Heart left ventricle (tissue), 16 donors: ENCODE measurements at regions of chr6 and their contacts with region 1.

Region 1: DNA sequence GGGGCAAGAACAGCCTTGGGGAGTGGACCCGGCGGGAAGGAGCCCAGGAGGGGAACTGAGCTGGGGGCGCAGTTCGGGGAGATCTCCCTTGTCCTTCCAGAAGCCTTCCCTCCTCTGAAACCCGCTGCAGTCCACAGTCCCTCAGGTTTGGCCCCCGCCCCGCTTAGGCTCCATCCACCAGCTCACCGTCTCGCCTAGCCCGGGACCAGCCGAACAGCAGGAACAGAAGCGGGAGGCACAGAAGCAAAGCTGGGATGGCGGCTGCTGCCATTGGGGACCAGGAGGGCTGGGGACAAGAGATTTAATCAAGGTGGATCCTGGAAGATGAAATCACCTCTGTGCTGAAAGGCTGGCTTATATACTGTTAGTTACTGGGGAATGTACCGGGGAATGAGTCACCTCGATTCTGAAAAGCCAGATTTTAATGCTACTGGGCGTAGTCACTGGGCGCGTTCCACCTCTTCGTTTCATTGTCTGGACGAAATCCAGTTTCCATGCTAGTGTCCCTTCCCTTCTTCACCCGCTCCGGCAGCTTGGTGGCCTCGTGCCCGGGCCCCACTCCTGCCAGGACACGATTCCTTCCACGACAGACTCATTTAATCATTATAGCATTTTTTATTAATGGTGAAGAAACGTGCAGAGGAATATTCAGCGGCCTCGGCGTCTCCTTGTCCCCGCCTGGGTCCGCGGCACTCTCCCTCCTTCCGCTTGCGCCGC is at the start of gene RAET1L:
- DNase-seq: no peak
- ATAC-seq: peak in 3 of 4 donors; percentile 49 to 79 (median 62)
- H3K4me3 ChIP-seq: peak within 1 kb of the TSS in 10 of 12 donors; percentile 5 to 46 (median 33)
- H3K27ac ChIP-seq: no peak within 1 kb of the TSS
- H3K4me1 ChIP-seq: peaks cover 0 to 14% (median 11%) of the 10 kb centered on the region in 12 donors
- H3K27me3 ChIP-seq: peaks cover 9 to 45% (median 28%) of the 10 kb centered on the region in 9 donors
- CTCF ChIP-seq: no peak
- POLR2A ChIP-seq: no peak
- total RNA-seq, gene RAET1L: not detected

Region 2: DNA sequence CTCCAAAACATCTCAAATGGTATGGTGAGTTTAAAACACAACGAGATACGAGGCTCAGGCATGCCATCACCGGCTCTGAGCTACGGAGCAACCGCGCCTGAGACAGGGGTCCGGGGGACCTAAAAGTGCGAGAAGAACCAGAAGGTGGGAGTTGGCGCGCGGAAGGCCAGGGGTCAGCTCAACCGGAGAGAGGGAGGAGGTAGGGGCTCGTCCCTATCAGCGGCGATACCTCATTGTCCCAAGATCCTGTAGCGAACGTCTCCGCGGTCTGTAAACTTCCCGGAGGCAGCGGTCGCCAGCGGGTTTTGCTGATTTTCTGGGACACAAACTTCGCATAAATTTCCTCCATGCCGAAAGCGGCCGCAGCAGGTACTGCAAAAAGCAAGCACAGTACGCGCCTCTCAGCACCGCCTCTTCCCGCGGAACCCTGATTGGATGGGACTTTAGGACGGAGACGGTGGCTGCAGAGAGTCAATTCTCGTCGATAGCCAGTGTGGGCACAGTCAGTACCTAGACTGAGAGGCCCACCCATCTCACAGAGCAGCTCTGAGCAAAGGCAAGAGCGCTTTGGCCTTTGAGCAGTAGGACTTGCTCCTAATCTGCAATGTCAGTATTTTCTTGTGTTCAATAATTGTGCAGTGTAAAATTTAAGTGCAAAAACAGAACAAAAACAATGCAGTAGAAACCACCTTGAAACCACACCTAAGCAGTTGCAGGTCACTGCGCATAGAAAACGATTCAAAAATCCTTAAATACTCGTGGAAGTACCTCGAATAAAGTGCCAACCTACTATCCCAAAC is 279.0 kb before region 1 on chr6 and contains the start of gene NUP43:
- intact Hi-C with region 1: no loop called
- DNase-seq: peak; percentile 94 to 97 (median 95)
- ATAC-seq: peak; percentile 74 to 85 (median 82)
- H3K4me3 ChIP-seq: peak within 1 kb of the TSS; percentile 49 to 91 (median 74)
- H3K27ac ChIP-seq: peak within 1 kb of the TSS; percentile 13 to 83 (median 72)
- H3K4me1 ChIP-seq: peaks cover 0 to 32% (median 25%) of the 10 kb centered on the region in 12 donors
- H3K27me3 ChIP-seq: no peaks in the 10 kb centered on the region
- CTCF ChIP-seq: peak in 11 of 12 donors; percentile 39 to 72 (median 50)
- POLR2A ChIP-seq: peak in 1 of 2 donors; percentile 36
- total RNA-seq, gene NUP43: 14.5 to 32.9 (median 27.2) TPM

Region 3: DNA sequence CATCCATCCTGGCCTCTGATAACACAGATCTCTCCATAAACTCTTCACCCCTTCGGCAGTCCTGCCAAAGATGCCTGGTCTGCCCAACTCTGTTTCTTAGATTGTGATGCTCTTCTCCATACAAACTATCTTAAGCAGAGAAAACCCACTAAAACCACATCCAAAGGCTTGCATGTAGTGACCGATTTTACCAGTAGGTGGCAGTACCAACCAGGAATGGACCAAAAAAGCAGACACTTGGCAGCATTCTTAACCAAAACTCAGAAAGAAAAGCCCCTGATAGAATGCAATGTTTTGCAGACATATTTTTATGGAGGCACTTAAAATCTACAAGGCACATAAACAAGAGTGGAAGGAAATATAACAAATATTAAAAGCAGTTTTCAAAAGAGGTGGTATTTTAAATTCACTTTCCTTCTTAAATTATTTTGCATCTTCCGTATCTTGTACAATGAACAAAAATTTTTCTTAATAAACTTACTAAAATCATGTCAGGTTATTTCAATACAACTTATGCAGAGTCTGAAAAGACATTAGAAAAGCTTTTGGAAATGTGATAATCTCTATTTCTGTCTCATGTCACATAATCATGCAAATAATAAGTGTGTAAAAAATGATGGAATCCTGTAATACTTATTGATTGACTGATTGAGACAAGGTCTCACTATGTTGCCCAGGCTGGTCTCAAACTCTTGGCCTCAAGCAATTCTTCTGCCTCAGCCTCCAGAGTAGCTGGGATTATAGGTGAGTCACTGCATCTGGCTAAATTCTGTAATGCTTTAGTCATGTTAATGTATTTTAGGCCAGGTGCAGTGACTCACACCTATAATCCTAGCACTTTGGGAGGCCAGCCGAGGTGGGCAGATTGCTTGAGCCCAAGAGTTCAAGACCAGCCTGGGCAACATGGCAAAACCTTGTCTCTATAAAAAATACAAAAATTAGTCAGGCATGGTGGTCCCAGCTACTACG is 190.6 kb before region 1 on chr6:
- intact Hi-C with region 1: loop called in 1 of 10 experiments (anchors 10 kb)
- DNase-seq: peak in 2 of 5 donors; percentile 36 to 50
- ATAC-seq: peak in 2 of 4 donors; percentile 42 to 62
- H3K4me3 ChIP-seq: no peak overlapping the region
- H3K27ac ChIP-seq: no peak overlapping the region
- H3K4me1 ChIP-seq: no peaks in the 10 kb centered on the region
- H3K27me3 ChIP-seq: no peaks in the 10 kb centered on the region
- CTCF ChIP-seq: peak; percentile 85 to 96 (median 93)
- POLR2A ChIP-seq: no peak

Region 4: GRCh38 chr6:150134280-150134936 is 109.0 kb after region 1 on chr6:
- intact Hi-C with region 1: no loop called
- DNase-seq: no peak
- ATAC-seq: no peak
- H3K4me3 ChIP-seq: no peak overlapping the region
- H3K27ac ChIP-seq: no peak overlapping the region
- H3K4me1 ChIP-seq: no peaks in the 10 kb centered on the region
- H3K27me3 ChIP-seq: peaks cover 0 to 3% (median 0%) of the 10 kb centered on the region in 9 donors
- CTCF ChIP-seq: no peak
- POLR2A ChIP-seq: no peak